ENCODE measurements at regions of chr4 and their contacts with region 1.

Region 1: DNA sequence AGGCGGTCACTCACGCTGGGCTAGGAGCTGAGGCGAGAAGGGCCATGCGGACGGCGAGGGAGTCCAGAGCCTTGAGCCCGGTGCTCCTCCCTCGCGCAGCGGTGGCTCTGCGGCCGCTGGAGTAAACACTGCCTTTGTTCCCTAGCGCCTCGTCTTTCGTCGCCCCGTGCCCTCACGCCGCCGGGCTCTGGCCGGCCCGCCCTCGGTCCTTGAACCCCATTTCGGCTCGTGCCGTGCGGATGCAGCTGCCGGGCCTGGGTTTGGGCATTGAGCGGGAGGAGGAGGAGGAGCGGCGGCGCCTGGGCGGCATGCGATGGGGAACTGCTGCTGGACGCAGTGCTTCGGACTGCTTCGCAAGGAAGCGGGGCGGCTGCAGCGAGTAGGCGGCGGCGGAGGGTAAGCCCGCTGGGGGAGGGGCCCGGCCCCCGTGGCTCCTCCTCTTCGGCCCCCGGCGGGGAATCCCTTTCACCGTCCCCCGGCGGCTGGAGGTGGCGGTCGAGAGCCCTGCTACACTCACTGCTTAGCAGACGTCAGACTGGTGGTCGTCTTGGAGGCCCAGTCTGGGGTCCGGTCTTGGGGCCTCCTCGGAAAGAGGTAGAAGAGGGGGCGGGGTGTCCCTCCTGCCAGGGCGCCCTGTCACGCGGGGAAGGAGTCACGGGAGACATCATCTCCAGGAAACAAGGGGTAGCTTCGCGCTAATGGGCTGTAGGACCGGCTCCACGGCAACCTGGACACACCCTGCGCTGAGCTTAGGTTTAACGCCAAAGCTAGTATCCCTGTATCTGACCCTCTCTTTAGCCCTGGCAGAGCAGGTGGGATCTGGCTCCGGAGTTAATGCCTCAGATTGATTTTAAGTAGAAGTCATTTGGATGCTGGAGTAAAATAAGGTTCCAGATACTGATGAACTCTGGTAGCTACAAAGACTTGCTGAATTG is at the start of gene AP1AR:
- DNase-seq: peak; percentile 95
- H3K4me3 Mint-ChIP-seq: peak within 1 kb of the TSS; percentile 96
- H3K27ac Mint-ChIP-seq: peak within 1 kb of the TSS; percentile 98
- H3K4me1 Mint-ChIP-seq: peaks cover 22% of the 10 kb centered on the region
- H3K27me3 Mint-ChIP-seq: peaks cover 1% of the 10 kb centered on the region
- total RNA-seq, gene AP1AR: 20.5 and 27.0 TPM in 2 replicates

Region 2: GRCh38 chr4:112119353-112119783 is 112.7 kb before region 1 on chr4:
- intact Hi-C with region 1: loop called (anchors 1 kb)
- DNase-seq: peak; percentile 76
- H3K4me3 Mint-ChIP-seq: peak overlapping the region; percentile 58
- H3K27ac Mint-ChIP-seq: peak overlapping the region; percentile 97
- H3K4me1 Mint-ChIP-seq: peaks cover 21% of the 10 kb centered on the region
- H3K27me3 Mint-ChIP-seq: peaks cover 6% of the 10 kb centered on the region

Region 3: DNA sequence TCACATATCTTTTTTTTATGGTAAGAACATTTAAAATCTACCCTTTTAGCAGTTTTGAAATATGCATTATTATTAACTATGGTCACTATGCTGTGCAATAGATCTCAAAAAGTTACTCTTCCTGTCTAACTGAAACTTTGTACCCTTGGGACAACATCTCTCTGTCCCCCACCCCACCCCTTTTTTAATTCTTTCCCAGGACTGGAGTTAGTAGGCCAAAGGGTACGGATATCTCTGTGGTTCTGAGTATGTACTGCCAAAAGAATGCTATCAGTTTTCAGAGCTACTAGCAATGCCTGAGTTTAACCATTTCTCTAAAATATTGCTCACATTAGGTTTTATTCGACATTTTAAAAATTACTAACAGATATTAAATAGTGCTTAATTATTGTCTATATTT is 91.5 kb before region 1 on chr4:
- intact Hi-C with region 1: no loop called
- DNase-seq: no peak
- H3K4me3 Mint-ChIP-seq: no peak overlapping the region
- H3K27ac Mint-ChIP-seq: no peak overlapping the region
- H3K4me1 Mint-ChIP-seq: peaks cover 22% of the 10 kb centered on the region
- H3K27me3 Mint-ChIP-seq: peaks cover 16% of the 10 kb centered on the region

Region 4: GRCh38 chr4:112199040-112199439 is 33.0 kb before region 1 on chr4:
- intact Hi-C with region 1: loop called (anchors 1 kb)
- DNase-seq: no peak
- H3K4me3 Mint-ChIP-seq: no peak overlapping the region
- H3K27ac Mint-ChIP-seq: no peak overlapping the region
- H3K4me1 Mint-ChIP-seq: peaks cover 17% of the 10 kb centered on the region
- H3K27me3 Mint-ChIP-seq: peaks cover 1% of the 10 kb centered on the region

Region 5: GRCh38 chr4:112284662-112285411 is 52.8 kb after region 1 on chr4:
- intact Hi-C with region 1: loop called (anchors 1 kb)
- DNase-seq: peak; percentile 74
- H3K4me3 Mint-ChIP-seq: peak overlapping the region; percentile 95
- H3K27ac Mint-ChIP-seq: peak overlapping the region; percentile 94
- H3K4me1 Mint-ChIP-seq: peaks cover 77% of the 10 kb centered on the region
- H3K27me3 Mint-ChIP-seq: no peaks in the 10 kb centered on the region

Region 6: GRCh38 chr4:112523764-112524505 is 291.9 kb after region 1 on chr4:
- intact Hi-C with region 1: loop called (anchors 5 kb)
- DNase-seq: peak; percentile 94
- H3K4me3 Mint-ChIP-seq: peak overlapping the region; percentile 88
- H3K27ac Mint-ChIP-seq: peak overlapping the region; percentile 38
- H3K4me1 Mint-ChIP-seq: peaks cover 30% of the 10 kb centered on the region
- H3K27me3 Mint-ChIP-seq: peaks cover 70% of the 10 kb centered on the region

Region 7: DNA sequence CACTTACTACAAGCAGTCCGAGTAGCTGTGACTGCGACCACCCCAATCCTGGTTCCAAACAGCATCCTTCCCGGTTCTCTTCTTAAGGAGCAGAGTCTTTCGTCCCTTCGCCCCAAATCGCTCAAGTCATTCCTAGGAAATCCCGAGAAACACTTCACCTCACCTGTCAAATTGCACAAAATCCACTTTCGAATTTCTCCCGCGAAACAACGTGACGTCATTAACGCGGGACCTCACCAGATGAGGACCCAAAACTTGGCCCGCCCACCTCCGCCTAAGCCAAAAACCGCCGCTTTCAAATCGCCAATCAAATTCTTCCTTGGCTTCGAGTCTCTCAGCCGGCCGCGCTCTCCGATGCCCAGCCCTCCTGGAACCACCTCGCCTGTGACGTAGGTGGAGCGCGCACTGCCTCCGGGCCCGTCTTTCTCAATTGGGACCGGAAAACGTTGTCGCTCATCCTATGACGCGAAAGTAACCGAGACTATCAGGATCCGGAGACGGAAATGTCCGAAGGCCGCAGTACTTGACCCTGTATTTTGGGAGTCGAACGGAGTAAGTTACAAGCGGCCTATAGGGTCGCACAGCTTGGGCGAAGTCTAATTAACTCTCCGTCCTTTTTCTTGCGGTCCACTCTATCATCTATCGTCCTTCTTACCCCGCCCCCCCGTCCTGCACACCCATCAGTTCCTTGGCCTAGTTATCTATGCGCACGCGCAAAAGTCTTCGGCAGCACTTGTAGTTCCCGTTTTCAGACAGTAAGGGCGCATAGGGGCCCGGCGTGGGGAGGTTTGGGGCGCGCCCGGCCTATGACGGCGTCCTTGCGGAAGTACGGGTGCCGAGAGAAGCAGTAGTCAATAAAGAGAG is 404.9 kb after region 1 on chr4 and contains the starts of genes LARP7 and ZGRF1:
- intact Hi-C with region 1: loop called (anchors 1 kb)
- DNase-seq: peak; percentile 99
- H3K4me3 Mint-ChIP-seq: no peak within 1 kb of the TSS
- H3K27ac Mint-ChIP-seq: no peak within 1 kb of the TSS
- H3K4me1 Mint-ChIP-seq: peaks cover 29% of the 10 kb centered on the region
- H3K27me3 Mint-ChIP-seq: no peaks in the 10 kb centered on the region
- total RNA-seq, gene LARP7: 47.6 and 48.5 TPM in 2 replicates
- total RNA-seq, gene ZGRF1: 32.4 and 37.0 TPM in 2 replicates

Measured in activated CD4-positive, alpha-beta T cell treated with anti-CD3 and anti-CD28 coated beads, Interleukin-2, amount 10 ng/mL, durations not matched to agents 24 days and 14 days (primary cell).